Right ventricle myocardium inferior (tissue), 1 donor: ENCODE measurements at regions of chr13 and their contacts with region 1.

Region 1: DNA sequence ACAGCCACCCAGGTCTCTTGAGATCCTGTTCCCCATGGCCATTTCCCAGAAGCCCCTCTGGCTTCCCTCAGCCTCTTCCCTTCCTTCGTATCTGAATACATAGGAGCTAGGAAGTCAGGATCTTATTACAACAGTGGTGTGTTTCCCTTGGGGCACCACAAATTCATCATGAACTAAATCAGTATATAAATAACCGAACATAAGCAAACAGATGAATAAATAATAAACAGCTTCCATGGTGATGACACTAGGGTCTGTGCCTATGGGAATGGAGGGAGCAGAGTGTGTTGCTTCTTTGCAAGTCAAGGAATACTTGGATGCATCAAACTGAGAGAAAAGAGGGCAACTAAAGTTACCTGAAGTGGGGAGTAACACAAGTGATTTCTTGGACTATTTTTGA is 527.6 kb downstream of the LMO7 start:
- DNase-seq: no peak
- ATAC-seq: no peak

Region 2: DNA sequence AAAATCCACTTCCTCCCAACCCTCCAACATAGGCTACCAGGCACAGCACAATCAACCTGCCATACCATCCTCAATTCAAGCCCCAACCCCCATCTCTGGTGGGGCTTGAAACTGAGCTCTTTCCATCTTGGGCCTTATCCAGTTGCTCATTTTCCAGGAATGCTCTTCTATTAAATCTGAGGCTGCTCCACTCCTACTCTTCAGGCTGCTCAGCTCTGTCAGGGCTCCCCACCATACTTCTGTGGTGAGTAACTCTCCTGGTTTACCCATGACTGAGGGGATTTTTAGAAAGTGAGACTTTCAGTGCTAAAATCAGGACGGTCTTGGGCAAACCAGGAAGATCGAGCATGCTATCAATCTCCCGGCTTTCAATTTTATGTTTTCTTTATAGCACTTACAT is 14.8 kb before region 1 on chr13:
- intact Hi-C with region 1: loop called (anchors 1 kb)
- DNase-seq: no peak
- ATAC-seq: no peak

Region 3: DNA sequence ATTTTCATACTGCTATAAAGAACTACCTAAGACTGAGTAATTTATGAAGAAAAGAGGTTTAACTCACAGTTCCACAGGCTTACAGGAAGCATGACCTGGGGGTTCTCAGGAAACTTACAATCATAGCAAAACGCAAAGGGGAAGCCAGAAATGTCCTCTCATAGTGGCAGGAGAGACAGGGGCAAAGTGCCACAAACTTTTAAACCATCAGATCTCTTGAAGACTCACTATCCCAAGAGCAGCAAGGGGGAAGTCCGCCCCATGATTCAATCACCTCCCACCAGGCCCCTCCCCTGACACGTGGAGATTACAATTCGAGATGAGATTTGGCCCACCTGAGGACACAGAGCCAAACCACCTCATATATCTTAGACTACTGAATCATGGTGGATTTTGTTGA is 523.7 kb after region 1 on chr13:
- intact Hi-C with region 1: no loop called
- DNase-seq: no peak
- ATAC-seq: no peak